Gastrocnemius medialis (tissue), 4 donors: ENCODE measurements at regions of chr7 and their contacts with region 1.

Region 1: GRCh38 chr7:116588641-116589594 is 64.1 kb downstream of the CAV1 start:
- DNase-seq: no peak
- ATAC-seq: peak in 1 of 2 donors; percentile 31
- H3K4me3 ChIP-seq: no peak overlapping the region
- H3K27ac ChIP-seq: peak overlapping the region in 2 of 4 donors; percentile 36 to 37
- H3K4me1 ChIP-seq: peaks cover 10 to 12% of the 10 kb centered on the region in 2 donors
- H3K27me3 ChIP-seq: no peaks in the 10 kb centered on the region
- CTCF ChIP-seq: peak; percentile 66 to 84 (median 71)
- POLR2A ChIP-seq: no peak

Region 2: GRCh38 chr7:116173051-116174028 is 415.6 kb before region 1 on chr7:
- in situ Hi-C with region 1: loop called in 1 of 4 experiments (anchors 10 kb)
- intact Hi-C with region 1: loop called (anchors 10 kb)
- DNase-seq: no peak
- ATAC-seq: peak in 1 of 2 donors; percentile 46
- H3K4me3 ChIP-seq: no peak overlapping the region
- H3K27ac ChIP-seq: no peak overlapping the region
- H3K4me1 ChIP-seq: no peaks in the 10 kb centered on the region
- H3K27me3 ChIP-seq: no peaks in the 10 kb centered on the region
- CTCF ChIP-seq: peak in 4 of 5 experiments; percentile 20 to 53 (median 42)
- POLR2A ChIP-seq: no peak

Region 3: DNA sequence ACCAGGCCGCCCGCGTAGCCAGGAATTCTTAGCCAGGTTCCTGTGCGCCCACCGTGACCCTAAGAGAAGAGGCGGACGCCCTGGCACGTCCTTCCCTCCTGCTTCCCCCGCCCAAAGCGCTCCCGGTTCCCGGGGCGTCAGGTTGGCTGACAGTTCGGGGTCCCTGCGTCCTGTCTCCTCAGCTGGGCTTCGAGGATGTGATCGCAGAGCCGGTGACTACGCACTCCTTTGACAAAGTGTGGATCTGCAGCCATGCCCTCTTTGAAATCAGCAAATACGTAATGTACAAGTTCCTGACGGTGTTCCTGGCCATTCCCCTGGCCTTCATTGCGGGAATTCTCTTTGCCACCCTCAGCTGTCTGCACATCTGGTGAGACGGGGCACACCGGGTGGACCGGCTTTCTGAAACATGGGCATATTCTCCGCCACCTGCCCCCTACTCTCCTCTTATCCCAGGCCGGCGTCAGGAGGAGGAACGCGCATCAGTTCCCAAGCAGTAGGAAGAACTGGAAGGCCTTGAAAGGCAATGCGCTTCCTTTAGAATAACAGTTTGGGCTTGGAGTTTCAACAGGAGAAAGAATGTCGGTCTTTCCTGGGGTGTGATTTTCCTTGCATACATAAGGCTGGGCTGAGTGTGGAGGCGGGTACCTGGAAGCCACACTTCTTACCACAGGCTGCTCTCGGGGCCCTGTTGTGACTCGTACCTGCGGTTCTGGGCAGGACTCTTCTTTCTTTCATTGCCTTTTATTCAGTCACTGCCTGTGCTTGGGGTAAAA is 88.7 kb before region 1 on chr7:
- in situ Hi-C with region 1: no loop called
- intact Hi-C with region 1: no loop called
- DNase-seq: no peak
- ATAC-seq: peak; percentile 31 to 36
- H3K4me3 ChIP-seq: peak overlapping the region; percentile 74 to 87 (median 78)
- H3K27ac ChIP-seq: peak overlapping the region; percentile 74 to 87 (median 83)
- H3K4me1 ChIP-seq: peaks cover 0 to 6% of the 10 kb centered on the region in 2 donors
- H3K27me3 ChIP-seq: peaks cover 0 to 16% (median 11%) of the 10 kb centered on the region in 3 donors
- CTCF ChIP-seq: no peak
- POLR2A ChIP-seq: no peak

Region 4: GRCh38 chr7:116525913-116526861 is 62.7 kb before region 1 on chr7:
- in situ Hi-C with region 1: loop called in 2 of 4 experiments (anchors 10 kb)
- intact Hi-C with region 1: no loop called
- DNase-seq: peak; percentile 53 to 55
- ATAC-seq: peak; percentile 72 to 80
- H3K4me3 ChIP-seq: peak overlapping the region; percentile 59 to 79 (median 70)
- H3K27ac ChIP-seq: peak overlapping the region; percentile 82 to 85 (median 82)
- H3K4me1 ChIP-seq: peaks cover 0 to 14% of the 10 kb centered on the region in 2 donors
- H3K27me3 ChIP-seq: no peaks in the 10 kb centered on the region
- CTCF ChIP-seq: peak; percentile 67 to 95 (median 88)
- POLR2A ChIP-seq: peak; percentile 43 to 58

Region 5: DNA sequence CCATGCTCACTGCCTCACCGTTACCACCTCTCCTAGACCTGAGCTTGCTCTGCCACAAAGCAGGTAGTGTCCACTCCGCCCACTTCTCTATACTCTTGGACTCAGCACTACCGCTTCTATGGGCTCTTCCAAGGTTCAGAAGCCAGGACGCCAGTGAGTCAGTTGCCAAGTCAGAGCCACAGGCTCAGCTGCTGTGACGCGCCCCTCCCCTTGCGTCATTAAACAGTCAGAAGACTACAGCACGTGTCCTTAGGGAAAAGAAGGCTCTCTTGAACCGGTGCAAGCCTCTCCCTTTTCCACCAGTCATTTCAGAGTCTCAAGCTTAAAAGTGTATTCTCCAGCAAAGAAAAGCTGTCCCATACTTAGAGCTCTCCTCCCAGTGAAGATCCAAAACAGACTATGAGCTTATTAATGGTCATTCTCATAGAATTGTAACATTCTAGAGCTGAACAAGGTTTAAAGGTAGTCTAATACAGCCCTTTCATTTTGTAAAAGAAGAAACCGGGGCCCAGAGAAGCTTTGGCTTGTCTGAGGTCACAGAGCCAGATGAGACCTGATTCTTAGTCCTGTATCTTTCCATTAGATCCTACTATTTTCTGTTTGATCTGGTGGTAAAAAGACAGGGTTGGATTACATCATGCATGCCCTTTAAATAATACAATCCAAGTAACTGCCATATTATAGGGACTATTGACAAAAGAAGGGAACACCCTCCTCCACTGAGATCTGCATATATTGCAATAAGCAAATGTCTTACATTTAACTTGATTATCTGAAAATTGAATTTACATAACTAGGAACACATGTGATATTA is 42.2 kb after region 1 on chr7:
- in situ Hi-C with region 1: no loop called
- intact Hi-C with region 1: loop called (anchors 2 kb)
- DNase-seq: peak; percentile 91 to 97
- ATAC-seq: peak; percentile 82 to 89
- H3K4me3 ChIP-seq: peak overlapping the region in 1 of 4 donors; percentile 10
- H3K27ac ChIP-seq: peak overlapping the region; percentile 81 to 92 (median 90)
- H3K4me1 ChIP-seq: peaks cover 58 to 62% of the 10 kb centered on the region in 2 donors
- H3K27me3 ChIP-seq: no peaks in the 10 kb centered on the region
- CTCF ChIP-seq: no peak
- POLR2A ChIP-seq: peak; percentile 79 to 87

Region 6: DNA sequence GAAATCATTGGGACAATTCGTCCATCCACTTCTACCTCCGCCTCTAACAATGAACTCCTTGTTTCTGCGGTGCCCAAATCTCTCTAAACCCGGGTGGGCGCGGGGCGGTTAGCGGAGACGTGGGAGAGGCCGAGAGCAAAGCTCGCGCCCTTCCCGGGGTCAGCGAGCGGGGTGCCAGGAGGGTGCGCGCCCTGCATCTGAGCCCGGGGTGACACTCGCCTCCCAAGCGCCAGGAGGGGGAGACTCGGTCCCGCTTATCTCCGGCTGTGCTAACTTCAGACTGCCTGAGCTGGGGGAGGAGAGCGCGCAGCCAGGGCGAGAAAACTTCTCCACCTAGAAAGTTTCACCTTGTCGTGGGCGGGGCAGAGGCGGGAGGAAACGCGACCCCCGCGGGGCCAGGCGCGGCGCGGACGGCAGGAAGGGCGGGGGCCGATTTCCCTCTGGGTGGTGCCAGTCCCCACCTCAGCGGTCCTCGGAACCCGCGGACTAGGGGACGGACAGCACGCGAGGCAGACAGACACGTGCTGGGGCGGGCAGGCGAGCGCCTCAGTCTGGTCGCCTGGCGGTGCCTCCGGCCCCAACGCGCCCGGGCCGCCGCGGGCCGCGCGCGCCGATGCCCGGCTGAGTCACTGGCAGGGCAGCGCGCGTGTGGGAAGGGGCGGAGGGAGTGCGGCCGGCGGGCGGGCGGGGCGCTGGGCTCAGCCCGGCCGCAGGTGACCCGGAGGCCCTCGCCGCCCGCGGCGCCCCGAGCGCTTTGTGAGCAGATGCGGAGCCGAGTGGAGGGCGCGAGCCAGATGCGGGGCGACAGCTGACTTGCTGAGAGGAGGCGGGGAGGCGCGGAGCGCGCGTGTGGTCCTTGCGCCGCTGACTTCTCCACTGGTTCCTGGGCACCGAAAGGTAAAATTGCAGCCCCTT is 83.0 kb after region 1 on chr7 and contains the start of gene MET:
- in situ Hi-C with region 1: loop called in 3 of 4 experiments (anchors 5 to 10 kb)
- intact Hi-C with region 1: loop called (anchors 2 kb)
- DNase-seq: peak; percentile 81 to 89
- ATAC-seq: peak; percentile 76 to 82
- H3K4me3 ChIP-seq: peak within 1 kb of the TSS; percentile 77 to 83 (median 78)
- H3K27ac ChIP-seq: peak within 1 kb of the TSS; percentile 95 to 96 (median 96)
- H3K4me1 ChIP-seq: peaks cover 46 to 51% of the 10 kb centered on the region in 2 donors
- H3K27me3 ChIP-seq: no peaks in the 10 kb centered on the region
- CTCF ChIP-seq: peak; percentile 70 to 82 (median 75)
- POLR2A ChIP-seq: peak; percentile 88 to 92
- total RNA-seq, gene MET: 15.9 to 36.8 (median 28.7) TPM

Region 7: DNA sequence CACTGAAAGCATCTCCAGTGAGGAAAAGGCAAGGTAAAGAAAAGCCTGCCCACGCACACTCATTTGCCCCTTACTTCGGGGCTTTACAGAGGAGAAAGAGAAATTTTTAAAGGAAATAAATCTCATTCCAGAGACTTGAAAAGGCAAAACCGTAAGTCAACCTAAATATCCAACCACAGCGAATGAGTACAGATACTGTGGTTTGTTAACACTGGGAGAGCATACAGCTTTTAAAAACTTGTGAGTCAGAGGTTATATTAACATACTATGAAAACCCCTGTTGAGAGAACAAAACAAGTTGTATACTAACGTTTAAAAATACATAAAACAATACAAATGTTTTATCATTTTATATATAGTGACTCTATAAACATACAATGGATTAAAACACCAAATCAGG is 335.8 kb after region 1 on chr7:
- in situ Hi-C with region 1: no loop called
- intact Hi-C with region 1: no loop called
- DNase-seq: no peak
- ATAC-seq: no peak
- H3K4me3 ChIP-seq: no peak overlapping the region
- H3K27ac ChIP-seq: no peak overlapping the region
- H3K4me1 ChIP-seq: no peaks in the 10 kb centered on the region
- H3K27me3 ChIP-seq: no peaks in the 10 kb centered on the region
- CTCF ChIP-seq: no peak
- POLR2A ChIP-seq: no peak